ENCODE measurements at regions of chr22 and their contacts with region 1.

Region 1: DNA sequence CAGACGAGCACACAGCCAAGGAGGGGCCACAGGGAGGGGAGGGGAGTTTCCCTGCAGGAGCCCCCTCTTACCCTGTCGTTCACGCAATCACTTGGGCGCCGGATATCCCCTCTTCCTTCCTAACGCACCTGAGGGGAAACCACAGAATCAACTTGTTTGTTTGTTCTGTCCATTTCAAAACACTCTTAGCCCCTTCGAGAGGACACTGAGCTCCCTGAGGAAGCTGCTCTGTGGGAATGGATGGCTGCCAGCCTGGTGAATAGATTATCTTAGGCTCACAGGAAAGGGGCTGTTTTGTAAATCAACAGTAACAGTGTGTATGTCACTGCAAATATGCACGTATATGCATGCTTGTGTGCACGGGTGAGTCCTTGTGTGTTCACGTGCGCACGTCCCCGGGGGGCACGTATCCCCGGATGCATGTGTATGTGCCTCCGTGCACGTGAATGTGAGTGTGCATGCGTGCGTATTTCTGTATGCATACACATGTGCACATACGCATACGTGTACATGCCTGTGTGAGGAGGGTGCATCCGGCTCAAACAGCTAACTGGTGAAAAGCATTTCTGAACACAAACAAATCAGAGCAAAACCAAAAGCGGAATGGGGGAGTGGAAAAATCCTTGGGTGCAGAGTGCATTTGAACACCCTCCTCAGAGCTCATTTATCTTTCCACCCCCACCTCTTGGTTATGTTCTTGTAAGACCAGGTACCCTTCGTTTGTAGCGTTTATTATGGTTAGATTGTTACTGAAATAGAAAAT is 7.2 kb downstream of the ARSA start:
- DNase-seq: peak; percentile 92
- H3K4me3 ChIP-seq: peak overlapping the region; percentile 44 to 61
- H3K27ac ChIP-seq: no peak overlapping the region
- H3K4me1 ChIP-seq: peaks cover 0 to 16% of the 10 kb centered on the region in 2 experiments; a peak in 2 of 4 replicates
- H3K27me3 ChIP-seq: no peaks in the 10 kb centered on the region
- CTCF ChIP-seq: no peak; the same call in 1 of the 2 replicates
- EP300 ChIP-seq: no peak
- RAD21 ChIP-seq: no peak

Region 2: GRCh38 chr22:50507991-50508884 is 112.5 kb before region 1 on chr22 and contains the start of gene NCAPH2:
- CTCF ChIA-PET with region 1: no interaction called
- POLR2A ChIA-PET with region 1: no interaction called
- DNase-seq: peak; percentile 100
- H3K4me3 ChIP-seq: peak within 1 kb of the TSS; percentile 81 to 85
- H3K27ac ChIP-seq: peak within 1 kb of the TSS; percentile 75 to 83
- H3K4me1 ChIP-seq: peaks cover 7 to 14% of the 10 kb centered on the region in 2 experiments; a peak in 3 of 4 replicates
- H3K27me3 ChIP-seq: no peaks in the 10 kb centered on the region
- CTCF ChIP-seq: no peak
- EP300 ChIP-seq: peak in 1 of 2 experiments; percentile 36; a peak in 1 of 4 replicates
- RAD21 ChIP-seq: no peak
- polyA plus RNA-seq, gene NCAPH2: 21.1 and 22.4 TPM in 2 replicates

Region 3: DNA sequence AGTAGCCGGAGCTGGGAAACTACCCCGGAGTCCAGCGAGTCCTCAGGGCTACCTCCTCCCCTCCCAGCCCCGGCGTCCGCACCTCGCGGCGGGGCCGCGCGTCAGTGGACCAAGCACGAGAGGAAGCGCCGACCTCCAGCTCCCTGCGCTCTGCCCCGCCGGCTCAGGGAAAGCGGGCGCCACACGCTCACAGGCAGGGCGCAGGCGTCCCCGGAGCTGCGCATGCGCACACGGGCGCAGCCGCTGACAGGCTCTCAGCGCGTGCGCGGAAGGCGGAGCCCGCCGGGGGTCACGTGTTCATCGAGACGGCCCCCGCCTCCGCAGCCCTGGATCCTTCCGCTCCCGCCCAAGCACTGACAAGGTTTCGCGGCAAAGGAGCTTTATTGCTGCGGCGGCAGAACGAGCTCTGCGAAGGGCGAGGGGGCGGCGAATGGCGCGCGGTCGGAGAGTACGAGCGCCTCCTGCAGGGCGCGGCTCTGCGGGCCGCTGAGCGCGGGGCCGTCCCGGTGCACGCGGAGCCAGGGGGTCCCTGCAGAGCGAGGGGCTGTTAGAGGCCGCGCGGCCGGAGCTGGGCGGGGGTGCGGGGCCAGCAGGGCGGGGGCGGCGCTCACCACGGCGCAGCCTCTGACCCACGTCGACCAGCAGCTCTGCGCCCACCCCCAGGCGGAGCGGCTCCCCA is 95.2 kb before region 1 on chr22 and contains the start of gene SCO2:
- CTCF ChIA-PET with region 1: interaction called, 22 read pairs
- POLR2A ChIA-PET with region 1: interaction called, 6 read pairs
- DNase-seq: peak; percentile 100
- H3K4me3 ChIP-seq: peak within 1 kb of the TSS; percentile 80 to 81
- H3K27ac ChIP-seq: peak within 1 kb of the TSS; percentile 68 to 93
- H3K4me1 ChIP-seq: peaks cover 7 to 24% of the 10 kb centered on the region in 2 experiments; a peak in 2 of 4 replicates
- H3K27me3 ChIP-seq: no peaks in the 10 kb centered on the region
- CTCF ChIP-seq: peak; percentile 50
- EP300 ChIP-seq: no peak
- RAD21 ChIP-seq: peak; percentile 36; the same call in 1 of the 2 replicates
- polyA plus RNA-seq, gene SCO2: 3.2 and 4.0 TPM in 2 replicates

Region 4: GRCh38 chr22:50562523-50563412 is 58.0 kb before region 1 on chr22 and contains the start of gene SYCE3:
- CTCF ChIA-PET with region 1: interaction called, 16 read pairs
- POLR2A ChIA-PET with region 1: no interaction called
- DNase-seq: peak; percentile 97
- H3K4me3 ChIP-seq: peak within 1 kb of the TSS; percentile 62 to 96
- H3K27ac ChIP-seq: no peak within 1 kb of the TSS; a peak in 2 of 4 replicates
- H3K4me1 ChIP-seq: peaks cover 0 to 4% of the 10 kb centered on the region in 2 experiments; a peak in 1 of 4 replicates
- H3K27me3 ChIP-seq: no peaks in the 10 kb centered on the region
- CTCF ChIP-seq: peak; percentile 79
- EP300 ChIP-seq: no peak
- RAD21 ChIP-seq: peak; percentile 65
- polyA plus RNA-seq, gene SYCE3: 2.1 and 3.6 TPM in 2 replicates

Region 5: GRCh38 chr22:50582562-50583293 is 38.0 kb before region 1 on chr22 and contains the start of gene CHKB:
- CTCF ChIA-PET with region 1: interaction called, 13 read pairs
- POLR2A ChIA-PET with region 1: interaction called, 4 read pairs
- DNase-seq: peak; percentile 99
- H3K4me3 ChIP-seq: peak within 1 kb of the TSS; percentile 89 to 94
- H3K27ac ChIP-seq: peak within 1 kb of the TSS; percentile 83 to 96; a peak in 3 of 4 replicates
- H3K4me1 ChIP-seq: peaks cover 0 to 14% of the 10 kb centered on the region in 2 experiments; a peak in 1 of 4 replicates
- H3K27me3 ChIP-seq: no peaks in the 10 kb centered on the region
- CTCF ChIP-seq: no peak
- EP300 ChIP-seq: no peak
- RAD21 ChIP-seq: no peak
- polyA plus RNA-seq, gene CHKB: 39.6 and 57.4 TPM in 2 replicates

Region 6: DNA sequence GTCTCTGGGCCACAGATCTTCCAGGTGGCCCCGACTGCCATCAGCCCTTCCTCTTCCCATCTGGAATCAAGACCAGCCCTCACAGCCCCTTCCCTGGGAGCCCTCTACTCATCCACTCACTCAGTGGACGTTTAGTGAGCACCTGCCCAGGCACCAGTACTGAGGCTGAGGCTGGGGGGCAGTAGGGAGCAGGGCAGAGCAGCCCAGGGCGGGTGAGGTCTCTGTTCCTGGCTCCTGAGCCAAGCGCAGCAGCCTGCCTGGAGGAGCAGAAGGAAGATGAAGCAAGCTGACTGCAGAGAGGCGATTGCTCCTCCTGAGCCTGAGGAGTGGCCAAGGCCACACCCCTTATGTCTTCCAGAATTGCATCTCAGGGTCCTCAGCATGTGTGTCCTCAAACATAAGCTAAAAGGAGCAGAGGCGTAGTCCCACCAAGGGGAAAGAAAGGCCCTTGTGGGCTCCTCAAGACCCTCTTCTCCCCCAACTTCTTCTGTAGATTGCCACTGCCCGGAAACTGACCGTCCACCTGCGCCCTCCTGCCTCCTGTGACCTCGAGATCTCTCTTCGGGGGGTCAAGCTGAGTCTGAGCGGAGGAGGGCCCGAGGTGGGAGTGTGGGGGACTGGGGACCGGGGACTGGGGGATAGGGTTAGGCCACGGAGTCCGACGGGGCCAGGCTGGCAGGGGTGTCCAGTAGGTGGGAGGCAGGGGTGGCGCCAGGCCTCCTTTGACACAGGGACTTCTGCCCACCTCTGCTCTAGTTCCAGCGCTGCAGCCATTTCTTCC is 14.4 kb before region 1 on chr22:
- CTCF ChIA-PET with region 1: interaction called, 17 read pairs
- POLR2A ChIA-PET with region 1: interaction called, 3 read pairs
- DNase-seq: no peak
- H3K4me3 ChIP-seq: no peak overlapping the region
- H3K27ac ChIP-seq: no peak overlapping the region
- H3K4me1 ChIP-seq: peaks cover 0 to 7% of the 10 kb centered on the region in 2 experiments; a peak in 1 of 4 replicates
- H3K27me3 ChIP-seq: no peaks in the 10 kb centered on the region
- CTCF ChIP-seq: no peak
- EP300 ChIP-seq: no peak
- RAD21 ChIP-seq: no peak

Region 7: GRCh38 chr22:50683086-50683993 is 62.6 kb after region 1 on chr22:
- CTCF ChIA-PET with region 1: no interaction called
- POLR2A ChIA-PET with region 1: no interaction called
- DNase-seq: peak; percentile 73
- H3K4me3 ChIP-seq: no peak overlapping the region
- H3K27ac ChIP-seq: no peak overlapping the region
- H3K4me1 ChIP-seq: no peaks in the 10 kb centered on the region
- H3K27me3 ChIP-seq: no peaks in the 10 kb centered on the region
- CTCF ChIP-seq: no peak
- EP300 ChIP-seq: no peak
- RAD21 ChIP-seq: no peak